Aorta (tissue), 5 donors: ENCODE measurements at regions of chr5 and their contacts with region 1.

Region 1: GRCh38 chr5:152271420-152271819 is 133.7 kb downstream of the NMUR2 start:
- DNase-seq: no peak
- ATAC-seq: no peak
- H3K4me3 ChIP-seq: no peak overlapping the region
- H3K27ac ChIP-seq: no peak overlapping the region
- H3K4me1 ChIP-seq: peaks cover 0 to 7% of the 10 kb centered on the region in 2 donors
- H3K27me3 ChIP-seq: no peaks in the 10 kb centered on the region

Region 2: GRCh38 chr5:152142840-152143469 is 128.5 kb before region 1 on chr5:
- intact Hi-C with region 1: loop called in 1 of 2 experiments (anchors 10 kb)
- DNase-seq: peak; percentile 59 to 81
- ATAC-seq: peak; percentile 73
- H3K4me3 ChIP-seq: no peak overlapping the region
- H3K27ac ChIP-seq: no peak overlapping the region
- H3K4me1 ChIP-seq: no peaks in the 10 kb centered on the region
- H3K27me3 ChIP-seq: no peaks in the 10 kb centered on the region

Region 3: GRCh38 chr5:152221721-152222629 is 49.4 kb before region 1 on chr5:
- intact Hi-C with region 1: loop called (anchors 5 kb)
- DNase-seq: no peak
- ATAC-seq: no peak
- H3K4me3 ChIP-seq: no peak overlapping the region
- H3K27ac ChIP-seq: peak overlapping the region in 1 of 2 donors; percentile 86
- H3K4me1 ChIP-seq: peaks cover 10% of the 10 kb centered on the region in 2 donors
- H3K27me3 ChIP-seq: no peaks in the 10 kb centered on the region